GM23248 (cell line): ENCODE measurements at regions of chr5 and their contacts with region 1.

Region 1: GRCh38 chr5:88140856-88141752 is 127.5 kb downstream of the TMEM161B start:
- DNase-seq: peak; percentile 97
- H3K4me3 ChIP-seq: peak overlapping the region; percentile 74
- H3K27ac ChIP-seq: no peak overlapping the region
- H3K4me1 ChIP-seq: peaks cover 8% of the 10 kb centered on the region; the same call in 1 of the 2 replicates
- H3K27me3 ChIP-seq: peaks cover 61% of the 10 kb centered on the region

Region 2: GRCh38 chr5:87499478-87500410 is 641.4 kb before region 1 on chr5:
- in situ Hi-C with region 1: no loop called
- DNase-seq: peak; percentile 52
- H3K4me3 ChIP-seq: no peak overlapping the region
- H3K27ac ChIP-seq: no peak overlapping the region
- H3K4me1 ChIP-seq: no peaks in the 10 kb centered on the region
- H3K27me3 ChIP-seq: no peaks in the 10 kb centered on the region

Region 3: DNA sequence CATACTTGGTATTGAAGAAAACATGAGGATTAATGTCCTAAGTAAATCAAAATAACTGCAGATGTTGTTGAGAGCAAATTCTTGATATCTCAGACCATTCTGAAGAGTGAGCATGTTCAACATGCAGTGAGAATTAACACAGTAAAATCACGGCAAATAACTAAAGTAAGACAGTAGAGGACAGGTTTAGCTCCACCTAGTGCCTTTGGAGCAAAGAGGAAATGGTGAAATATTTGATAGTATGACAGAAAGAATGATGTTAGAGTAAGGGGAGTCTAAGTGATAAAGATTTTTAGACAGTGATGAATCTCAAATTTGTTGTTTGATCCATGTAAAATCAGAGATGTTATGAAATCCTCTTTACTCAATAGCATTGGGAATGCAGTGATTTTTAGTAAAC is 296.7 kb before region 1 on chr5:
- in situ Hi-C with region 1: no loop called
- DNase-seq: no peak
- H3K4me3 ChIP-seq: no peak overlapping the region
- H3K27ac ChIP-seq: no peak overlapping the region
- H3K4me1 ChIP-seq: no peaks in the 10 kb centered on the region
- H3K27me3 ChIP-seq: no peaks in the 10 kb centered on the region

Region 4: DNA sequence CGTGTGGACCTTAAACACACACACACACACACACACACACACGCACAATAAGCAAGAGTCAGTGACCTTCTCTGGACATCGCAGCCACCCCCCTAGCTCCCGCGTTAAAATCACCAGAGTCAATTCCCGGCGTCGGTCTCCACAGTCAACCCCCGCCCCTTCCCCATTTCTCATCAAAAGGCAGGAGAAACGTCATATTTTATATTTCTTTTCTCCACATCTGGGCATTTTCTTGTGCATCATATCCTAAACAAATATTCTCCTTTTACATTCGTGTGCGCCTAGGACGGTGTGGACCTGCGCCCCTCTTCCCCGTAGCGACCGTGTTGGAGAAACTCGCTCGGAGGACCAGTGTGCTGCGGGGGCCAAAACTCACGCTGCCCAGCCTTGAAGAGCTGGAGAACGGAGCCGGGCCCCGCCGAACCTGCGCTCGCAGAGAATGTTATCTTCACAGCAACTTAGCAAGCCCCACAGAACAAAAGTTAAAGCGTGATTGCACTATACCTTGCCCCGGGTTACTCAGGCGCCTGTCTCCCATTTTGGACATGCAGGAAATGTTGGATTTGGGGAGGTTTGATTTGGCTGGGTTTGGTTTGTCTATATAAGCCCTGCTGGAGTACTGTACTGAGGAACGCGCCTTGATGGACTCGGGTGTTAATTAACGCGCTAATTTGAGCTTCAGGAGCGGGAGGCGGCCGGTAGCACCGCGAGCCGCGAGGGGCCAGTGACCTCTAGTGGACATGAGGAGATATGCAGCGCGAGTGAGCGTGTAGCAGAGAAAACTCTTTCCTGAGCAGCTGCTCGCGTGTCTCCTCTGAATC is 549.5 kb after region 1 on chr5:
- in situ Hi-C with region 1: loop called (anchors 25 kb)
- DNase-seq: peak; percentile 84
- H3K4me3 ChIP-seq: peak overlapping the region; percentile 67
- H3K27ac ChIP-seq: no peak overlapping the region
- H3K4me1 ChIP-seq: peaks cover 12% of the 10 kb centered on the region; the same call in 1 of the 2 replicates
- H3K27me3 ChIP-seq: peaks cover 95% of the 10 kb centered on the region